ENCODE measurements at regions of chr1 and their contacts with region 1.

Region 1: GRCh38 chr1:230713915-230714764 is at the start of gene AGT:
- DNase-seq: no peak
- ATAC-seq: peak; percentile 39
- H3K4me3 Mint-ChIP-seq: no peak within 1 kb of the TSS
- H3K27ac Mint-ChIP-seq: no peak within 1 kb of the TSS
- H3K4me1 Mint-ChIP-seq: peaks cover 8% of the 10 kb centered on the region
- H3K27me3 Mint-ChIP-seq: no peaks in the 10 kb centered on the region; the same call in 1 of the 2 replicates
- CTCF ChIP-seq: no peak
- total RNA-seq, gene AGT: 0.64 to 1.0 TPM (median 1.0 TPM) in 3 replicates

Region 2: GRCh38 chr1:230621324-230622030 is 92.7 kb before region 1 on chr1:
- CTCF ChIA-PET with region 1: no interaction called
- POLR2A ChIA-PET with region 1: no interaction called
- DNase-seq: no peak
- ATAC-seq: no peak
- H3K4me3 Mint-ChIP-seq: no peak overlapping the region
- H3K27ac Mint-ChIP-seq: no peak overlapping the region
- H3K4me1 Mint-ChIP-seq: peaks cover 19% of the 10 kb centered on the region
- H3K27me3 Mint-ChIP-seq: 0 out of 2 replicates have a peak, but pooled peaks cover 2% of the 10 kb centered on the region
- CTCF ChIP-seq: no peak

Region 3: DNA sequence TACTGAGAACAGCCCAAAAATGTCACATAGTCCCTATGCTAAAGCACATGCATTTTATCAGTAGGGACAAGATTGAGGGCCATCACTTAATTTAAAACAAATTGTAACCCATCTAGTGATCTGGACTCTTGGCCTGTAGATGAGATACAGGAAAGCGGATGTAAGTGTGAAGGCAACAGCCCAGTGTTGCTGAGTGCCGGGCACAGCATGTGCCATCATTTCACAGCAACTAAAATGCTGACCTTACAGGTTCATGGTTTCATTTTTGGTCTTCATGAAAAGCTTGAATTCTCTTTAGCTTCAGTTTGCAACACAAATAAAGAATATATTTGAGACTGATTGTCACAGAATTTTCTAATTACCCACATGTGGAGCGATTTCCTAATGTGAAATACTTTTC is 66.0 kb before region 1 on chr1:
- CTCF ChIA-PET with region 1: no interaction called
- POLR2A ChIA-PET with region 1: no interaction called
- DNase-seq: no peak
- ATAC-seq: no peak
- H3K4me3 Mint-ChIP-seq: no peak overlapping the region
- H3K27ac Mint-ChIP-seq: no peak overlapping the region
- H3K4me1 Mint-ChIP-seq: peaks cover 13% of the 10 kb centered on the region
- H3K27me3 Mint-ChIP-seq: no peaks in the 10 kb centered on the region
- CTCF ChIP-seq: no peak

Region 4: DNA sequence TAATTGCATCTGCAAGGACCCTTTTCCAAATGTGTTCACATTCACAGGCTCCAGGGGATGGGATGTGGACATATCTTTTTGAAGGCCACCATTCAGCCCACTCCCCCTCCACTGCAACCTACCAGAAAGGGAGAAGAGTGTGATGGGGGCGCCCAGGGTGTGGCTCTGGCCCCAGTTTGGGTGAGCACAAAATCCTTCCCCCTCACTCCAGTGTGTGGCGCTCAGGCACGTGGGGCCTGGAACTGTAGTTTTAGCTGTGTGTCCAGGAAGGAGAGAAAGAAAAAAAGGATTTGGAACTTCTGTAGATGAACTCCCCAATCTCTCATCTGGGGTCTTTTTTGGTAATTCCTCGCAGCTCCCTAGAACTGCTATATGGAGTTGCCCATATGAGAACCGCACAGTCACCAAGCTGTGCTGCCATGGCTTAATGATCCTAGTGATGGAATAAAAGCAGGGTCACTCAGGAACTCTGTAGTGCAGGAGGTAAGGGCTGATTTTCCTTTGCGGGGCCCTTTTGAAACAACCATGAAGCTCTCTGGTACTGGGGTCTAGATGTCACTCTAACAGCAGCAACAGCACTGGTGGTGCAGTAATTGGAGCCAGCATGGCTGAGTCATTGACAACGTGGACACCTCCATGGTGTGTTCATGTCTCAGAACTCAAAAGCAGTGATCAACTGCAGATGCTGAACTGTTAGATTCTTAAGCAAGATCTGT is 17.3 kb before region 1 on chr1:
- CTCF ChIA-PET with region 1: interaction called, 13 read pairs
- POLR2A ChIA-PET with region 1: interaction called, 3 read pairs
- DNase-seq: no peak
- ATAC-seq: peak; percentile 38; the same call in 1 of the 2 replicates
- H3K4me3 Mint-ChIP-seq: no peak overlapping the region
- H3K27ac Mint-ChIP-seq: no peak overlapping the region
- H3K4me1 Mint-ChIP-seq: peaks cover 13% of the 10 kb centered on the region
- H3K27me3 Mint-ChIP-seq: no peaks in the 10 kb centered on the region
- CTCF ChIP-seq: no peak

Measured in WTC11 (cell line).